GM12878 (cell line): ENCODE measurements at regions of chr17 and their contacts with region 1.

Region 1: DNA sequence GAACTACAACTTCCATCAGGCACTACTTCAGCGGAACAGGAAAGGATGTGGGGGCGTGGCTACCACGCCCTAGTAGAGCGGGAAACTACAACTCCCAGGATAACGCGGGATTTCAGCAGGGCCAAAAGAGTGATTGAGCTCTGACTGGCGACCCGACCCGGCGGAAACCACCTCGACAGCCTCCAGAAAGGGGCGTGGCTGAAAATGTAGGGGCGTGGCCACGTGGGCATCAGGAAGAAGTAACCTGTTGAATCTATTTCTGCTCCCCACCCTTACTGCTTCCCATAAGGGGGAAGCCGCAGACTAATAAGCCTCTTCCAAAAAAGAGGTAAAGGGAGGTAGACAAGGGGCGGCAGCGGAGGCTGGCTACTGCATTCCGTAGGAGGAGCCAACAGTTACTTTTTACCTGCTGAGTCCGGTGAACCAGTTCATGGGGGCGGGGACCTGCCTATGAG is at the start of gene TMEM102:
- DNase-seq: peak; percentile 97
- ATAC-seq: peak; percentile 87
- H3K4me3 ChIP-seq: peak within 1 kb of the TSS; percentile 78
- H3K27ac ChIP-seq: peak within 1 kb of the TSS; percentile 60
- H3K4me1 ChIP-seq: peaks cover 19% of the 10 kb centered on the region
- H3K27me3 ChIP-seq: peaks cover 0 to 4% of the 10 kb centered on the region in 2 experiments; a peak in 1 of 4 replicates
- CTCF ChIP-seq: no peak
- EP300 ChIP-seq: no peak
- POLR2A ChIP-seq: 0 out of 2 replicates have a peak, but pooled peaks have one; percentile 28
- RAD21 ChIP-seq: no peak
- polyA plus RNA-seq, gene TMEM102: 0.04 TPM in 1 of 2 experiments, not detected in the other

Region 2: DNA sequence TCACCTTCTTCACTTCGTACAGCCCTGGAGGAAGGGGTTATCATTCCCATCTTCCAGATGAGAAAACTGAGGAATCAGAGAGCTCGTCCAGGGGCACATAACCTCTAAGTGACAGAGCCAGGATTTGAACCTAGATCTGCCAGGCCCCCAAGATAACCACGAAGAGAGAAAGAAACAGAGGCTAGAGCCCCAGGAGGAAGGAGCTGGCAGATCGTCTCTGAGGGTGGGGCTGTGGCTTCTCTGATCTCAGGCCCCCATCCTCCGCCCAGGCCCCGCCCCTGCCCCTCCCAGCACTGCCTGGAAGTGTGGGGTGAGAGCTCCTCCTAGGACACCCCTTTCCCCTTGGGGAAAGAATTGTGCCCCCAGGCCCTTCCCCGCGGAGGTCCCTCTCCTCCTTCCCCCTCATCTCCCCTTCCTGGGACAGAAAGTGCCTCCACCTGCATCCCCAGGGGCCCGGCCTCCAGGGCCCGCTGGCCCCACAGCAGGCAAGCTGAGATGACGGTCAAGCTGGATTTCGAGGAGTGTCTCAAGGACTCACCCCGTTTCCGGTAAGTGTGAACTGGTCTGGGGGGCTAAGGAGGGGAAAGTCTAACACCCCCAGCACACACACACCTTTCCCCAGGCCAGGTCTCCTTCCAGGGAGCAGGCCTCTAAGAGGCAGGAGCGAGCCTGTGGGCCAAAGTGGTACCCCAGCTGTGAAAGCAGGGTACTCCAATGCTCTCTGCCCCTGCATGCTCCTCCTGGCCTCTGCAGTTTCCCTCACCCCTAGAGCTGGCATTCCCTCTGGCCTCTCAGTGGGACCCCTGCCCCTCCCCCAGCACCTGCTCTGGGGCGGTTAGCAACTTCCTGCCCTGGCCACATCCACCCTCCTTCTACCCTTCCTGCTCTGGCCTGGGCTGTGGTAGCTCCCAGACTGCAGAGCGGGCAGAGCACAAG is 98.7 kb before region 1 on chr17 and contains the start of gene ACAP1:
- CTCF ChIA-PET with region 1: interaction called, 10 read pairs
- POLR2A ChIA-PET with region 1: interaction called, 5 read pairs
- RAD21 ChIA-PET with region 1: interaction called, 3 read pairs
- SMC1A ChIA-PET with region 1: no interaction called
- in situ Hi-C with region 1: no loop called
- intact Hi-C with region 1: no loop called
- DNase-seq: no peak
- ATAC-seq: peak; percentile 93
- H3K4me3 ChIP-seq: peak within 1 kb of the TSS; percentile 96
- H3K27ac ChIP-seq: peak within 1 kb of the TSS; percentile 99
- H3K4me1 ChIP-seq: peaks cover 27% of the 10 kb centered on the region
- H3K27me3 ChIP-seq: no peaks in the 10 kb centered on the region
- CTCF ChIP-seq: 0 out of 6 replicates have a peak, but pooled peaks of 1 of the 3 experiments have one; percentile 11
- EP300 ChIP-seq: peak in 1 of 2 experiments; percentile 13; a peak in 1 of 4 replicates
- POLR2A ChIP-seq: peak; percentile 45
- RAD21 ChIP-seq: no peak
- polyA plus RNA-seq, gene ACAP1: 5.7 to 25.2 TPM

Region 3: GRCh38 chr17:7351665-7352501 is 83.4 kb before region 1 on chr17 and contains the start of gene KCTD11:
- CTCF ChIA-PET with region 1: interaction called, 58 read pairs
- POLR2A ChIA-PET with region 1: interaction called, 9 read pairs
- RAD21 ChIA-PET with region 1: interaction called, 21 read pairs
- SMC1A ChIA-PET with region 1: interaction called, 5 read pairs
- in situ Hi-C with region 1: no loop called
- intact Hi-C with region 1: loop called (anchors 5 kb)
- DNase-seq: no peak
- ATAC-seq: peak; percentile 81
- H3K4me3 ChIP-seq: peak within 1 kb of the TSS; percentile 88
- H3K27ac ChIP-seq: peak within 1 kb of the TSS; percentile 59
- H3K4me1 ChIP-seq: peaks cover 23% of the 10 kb centered on the region
- H3K27me3 ChIP-seq: no peaks in the 10 kb centered on the region
- CTCF ChIP-seq: peak in 2 of 3 experiments; percentile 55 to 59; a peak in 3 of 6 replicates
- EP300 ChIP-seq: no peak
- POLR2A ChIP-seq: peak; percentile 81
- RAD21 ChIP-seq: 0 out of 2 replicates have a peak, but pooled peaks have one; percentile 27
- polyA plus RNA-seq, gene KCTD11: 0.05 to 0.09 TPM

Region 4: DNA sequence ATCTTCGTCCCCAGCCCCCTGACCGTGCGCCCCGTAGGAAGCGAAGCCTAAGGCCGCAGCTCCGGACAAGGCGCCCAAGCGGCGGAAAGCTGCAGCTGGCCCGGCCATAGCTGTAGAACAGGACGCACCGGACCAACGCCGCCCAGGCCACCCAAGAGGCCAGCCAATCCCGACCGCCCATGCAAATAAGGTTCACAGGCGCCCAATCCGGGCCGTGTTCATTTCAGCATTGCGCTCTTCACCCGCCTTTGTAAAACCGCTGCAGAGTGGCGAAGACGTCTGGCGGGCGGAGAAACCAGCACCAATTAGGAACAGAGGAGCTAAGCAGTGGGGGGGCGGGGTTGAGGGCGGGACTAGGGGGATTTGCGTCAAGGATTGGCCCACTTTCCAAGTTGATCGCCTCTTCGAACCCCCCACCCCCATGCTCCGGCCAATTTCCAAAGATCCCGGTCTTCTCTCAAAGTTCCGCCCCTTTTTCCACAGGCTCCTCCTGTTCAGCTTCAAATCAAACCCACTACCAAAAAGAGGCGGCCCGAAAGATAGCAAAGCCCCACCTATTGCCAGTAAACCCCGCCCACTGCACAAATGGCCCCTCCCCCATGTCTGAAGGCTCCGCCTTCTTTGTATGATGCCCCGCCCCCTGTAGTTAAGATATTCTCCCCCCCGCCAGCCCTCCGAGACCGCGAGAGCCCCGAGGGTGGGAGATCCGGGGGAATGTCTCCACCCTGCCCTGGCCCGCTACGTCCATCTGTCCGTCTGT is 31.1 kb before region 1 on chr17 and contains the start of gene TMEM256:
- CTCF ChIA-PET with region 1: interaction called, 8 read pairs
- POLR2A ChIA-PET with region 1: interaction called, 17 read pairs
- RAD21 ChIA-PET with region 1: interaction called, 13 read pairs
- SMC1A ChIA-PET with region 1: interaction called, 8 read pairs
- in situ Hi-C with region 1: no loop called
- intact Hi-C with region 1: loop called (anchors 5 kb)
- DNase-seq: peak; percentile 92
- ATAC-seq: peak; percentile 99
- H3K4me3 ChIP-seq: peak within 1 kb of the TSS; percentile 85
- H3K27ac ChIP-seq: peak within 1 kb of the TSS; percentile 80
- H3K4me1 ChIP-seq: peaks cover 3% of the 10 kb centered on the region; the same call in 1 of the 2 replicates
- H3K27me3 ChIP-seq: peaks cover 0 to 6% of the 10 kb centered on the region in 2 experiments; a peak in 2 of 4 replicates
- CTCF ChIP-seq: no peak
- EP300 ChIP-seq: no peak
- POLR2A ChIP-seq: peak; percentile 95
- RAD21 ChIP-seq: no peak
- polyA plus RNA-seq, gene TMEM256: 210 to 246 TPM

Region 5: DNA sequence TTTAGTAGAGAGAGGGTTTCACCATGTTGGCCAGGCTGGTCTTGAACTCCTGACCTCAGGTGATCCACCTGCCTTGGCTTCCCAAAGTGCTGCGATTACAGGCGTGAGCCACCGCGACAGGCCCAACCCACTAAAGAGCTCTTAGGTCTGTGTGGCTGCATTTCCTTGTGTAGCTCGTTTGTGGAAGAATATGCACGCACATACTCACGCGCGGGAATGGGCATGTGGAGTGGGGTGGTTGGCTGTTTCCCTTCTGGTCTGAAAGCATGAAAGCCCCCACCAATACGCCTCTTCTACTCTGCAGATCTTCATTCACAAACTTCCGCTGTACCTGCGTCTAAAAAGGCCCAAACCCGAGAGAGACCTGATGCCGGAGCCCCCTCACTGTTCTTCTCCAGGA is 19.7 kb after region 1 on chr17:
- CTCF ChIA-PET with region 1: interaction called, 21 read pairs
- POLR2A ChIA-PET with region 1: interaction called, 52 read pairs
- RAD21 ChIA-PET with region 1: interaction called, 9 read pairs
- SMC1A ChIA-PET with region 1: interaction called, 5 read pairs
- in situ Hi-C with region 1: no loop called
- intact Hi-C with region 1: loop called (anchors 1 kb)
- DNase-seq: no peak
- ATAC-seq: no peak
- H3K4me3 ChIP-seq: peak overlapping the region; percentile 83; the same call in 1 of the 2 replicates
- H3K27ac ChIP-seq: no peak overlapping the region
- H3K4me1 ChIP-seq: peaks cover 6% of the 10 kb centered on the region
- H3K27me3 ChIP-seq: no peaks in the 10 kb centered on the region
- CTCF ChIP-seq: no peak
- EP300 ChIP-seq: no peak
- POLR2A ChIP-seq: no peak
- RAD21 ChIP-seq: no peak

Region 6: GRCh38 chr17:7478276-7479153 is 43.3 kb after region 1 on chr17:
- CTCF ChIA-PET with region 1: interaction called, 10 read pairs
- POLR2A ChIA-PET with region 1: interaction called, 63 read pairs
- RAD21 ChIA-PET with region 1: interaction called, 19 read pairs
- SMC1A ChIA-PET with region 1: interaction called, 8 read pairs
- in situ Hi-C with region 1: no loop called
- intact Hi-C with region 1: loop called (anchors 1 kb)
- DNase-seq: no peak
- ATAC-seq: peak; percentile 46
- H3K4me3 ChIP-seq: peak overlapping the region; percentile 89
- H3K27ac ChIP-seq: peak overlapping the region; percentile 64
- H3K4me1 ChIP-seq: peaks cover 11% of the 10 kb centered on the region
- H3K27me3 ChIP-seq: no peaks in the 10 kb centered on the region
- CTCF ChIP-seq: no peak
- EP300 ChIP-seq: no peak
- POLR2A ChIP-seq: peak; percentile 52
- RAD21 ChIP-seq: no peak